Activated CD8-positive, alpha-beta memory T cell treated with anti-CD3 and anti-CD28 coated beads, Interleukin-2, amount 10 ng/mL, durations not matched to agents 7 days and 5 days (primary cell): ENCODE measurements at regions of chr14 and their contacts with region 1.

Region 1: DNA sequence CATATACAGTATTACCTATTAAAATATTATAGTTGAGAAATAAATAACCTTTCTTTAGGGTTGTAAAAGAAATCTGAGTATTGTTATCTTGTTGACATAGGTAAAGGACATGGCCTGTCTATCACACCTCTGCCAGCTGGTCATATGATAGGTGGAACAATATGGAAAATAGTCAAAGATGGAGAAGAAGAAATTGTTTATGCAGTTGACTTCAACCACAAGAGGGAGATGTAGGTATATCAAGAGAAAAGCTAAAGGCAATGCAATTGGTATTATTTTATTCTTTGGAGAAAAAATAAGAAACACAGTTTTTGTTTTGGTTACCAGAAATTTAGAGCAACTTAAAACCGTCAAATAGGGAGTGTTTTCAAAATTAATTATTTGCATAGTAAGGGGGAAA is 13.5 kb downstream of the CPSF2 start:
- DNase-seq: no peak
- ATAC-seq: no peak
- H3K4me3 Mint-ChIP-seq: no peak overlapping the region
- H3K27ac Mint-ChIP-seq: no peak overlapping the region
- H3K4me1 Mint-ChIP-seq: no peaks in the 10 kb centered on the region
- H3K27me3 Mint-ChIP-seq: no peaks in the 10 kb centered on the region

Region 2: DNA sequence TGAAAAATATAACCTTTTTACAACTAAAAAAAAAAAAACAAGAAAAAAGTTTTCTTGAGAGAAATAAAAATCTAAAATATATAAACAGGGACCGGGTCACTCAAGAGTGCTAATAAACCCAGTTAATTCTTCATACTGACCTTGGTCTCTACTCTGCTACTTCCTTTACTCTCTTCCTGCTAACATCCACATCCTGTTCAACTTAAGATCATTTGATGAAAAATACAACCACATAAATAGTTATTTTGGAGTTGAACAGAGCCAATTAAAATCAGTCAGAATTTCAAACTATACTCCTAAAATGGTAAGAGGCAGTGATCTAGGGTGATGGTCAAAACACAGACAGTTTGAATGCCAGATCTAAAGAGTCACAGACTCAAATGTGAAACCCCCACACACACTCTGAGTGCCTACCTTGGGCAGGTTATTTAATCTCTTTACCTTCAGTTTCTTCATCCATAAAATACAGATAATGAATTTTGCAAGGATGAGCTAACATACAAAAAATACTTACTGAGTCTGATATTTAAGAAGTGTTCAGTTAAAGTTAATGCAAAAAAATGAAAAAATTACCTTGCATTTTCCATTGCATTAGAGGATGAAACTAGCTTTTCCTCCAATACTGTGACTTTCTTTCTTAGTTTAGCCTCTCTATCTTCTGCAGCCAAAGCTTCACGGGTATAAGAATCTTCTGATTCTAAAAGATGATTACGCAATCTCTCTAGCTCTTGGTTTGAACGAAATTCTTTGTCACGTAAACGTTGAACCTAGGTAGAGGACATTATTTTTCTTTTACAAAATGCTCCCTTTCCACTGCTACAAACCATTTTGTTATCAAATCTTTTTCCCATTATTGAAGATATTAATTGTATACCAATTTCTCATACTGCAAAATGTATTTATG is 136.3 kb before region 1 on chr14:
- CTCF ChIA-PET with region 1: no interaction called
- DNase-seq: no peak
- ATAC-seq: peak; percentile 48
- H3K4me3 Mint-ChIP-seq: peak overlapping the region; percentile 3
- H3K27ac Mint-ChIP-seq: peak overlapping the region; percentile 83
- H3K4me1 Mint-ChIP-seq: peaks cover 41% of the 10 kb centered on the region
- H3K27me3 Mint-ChIP-seq: no peaks in the 10 kb centered on the region

Region 3: GRCh38 chr14:92121670-92122350 is 13.5 kb before region 1 on chr14 and contains the starts of genes CPSF2 and NDUFB1:
- CTCF ChIA-PET with region 1: interaction called, 12 read pairs
- DNase-seq: peak; percentile 88
- ATAC-seq: peak; percentile 93
- H3K4me3 Mint-ChIP-seq: peak within 1 kb of the TSS; percentile 97
- H3K27ac Mint-ChIP-seq: peak within 1 kb of the TSS; percentile 100
- H3K4me1 Mint-ChIP-seq: peaks cover 52% of the 10 kb centered on the region
- H3K27me3 Mint-ChIP-seq: no peaks in the 10 kb centered on the region
- total RNA-seq, gene CPSF2: 75.5 to 107 TPM
- total RNA-seq, gene NDUFB1: 109 to 115 TPM